ENCODE measurements at regions of chr10 and their contacts with region 1.

Region 1: GRCh38 chr10:32346134-32346550 is 816 bp downstream of the EPC1 start:
- DNase-seq: peak; percentile 93
- H3K4me3 Mint-ChIP-seq: peak overlapping the region; percentile 94
- H3K27ac Mint-ChIP-seq: peak overlapping the region; percentile 98
- H3K4me1 Mint-ChIP-seq: peaks cover 70% of the 10 kb centered on the region
- H3K27me3 Mint-ChIP-seq: no peaks in the 10 kb centered on the region

Region 2: DNA sequence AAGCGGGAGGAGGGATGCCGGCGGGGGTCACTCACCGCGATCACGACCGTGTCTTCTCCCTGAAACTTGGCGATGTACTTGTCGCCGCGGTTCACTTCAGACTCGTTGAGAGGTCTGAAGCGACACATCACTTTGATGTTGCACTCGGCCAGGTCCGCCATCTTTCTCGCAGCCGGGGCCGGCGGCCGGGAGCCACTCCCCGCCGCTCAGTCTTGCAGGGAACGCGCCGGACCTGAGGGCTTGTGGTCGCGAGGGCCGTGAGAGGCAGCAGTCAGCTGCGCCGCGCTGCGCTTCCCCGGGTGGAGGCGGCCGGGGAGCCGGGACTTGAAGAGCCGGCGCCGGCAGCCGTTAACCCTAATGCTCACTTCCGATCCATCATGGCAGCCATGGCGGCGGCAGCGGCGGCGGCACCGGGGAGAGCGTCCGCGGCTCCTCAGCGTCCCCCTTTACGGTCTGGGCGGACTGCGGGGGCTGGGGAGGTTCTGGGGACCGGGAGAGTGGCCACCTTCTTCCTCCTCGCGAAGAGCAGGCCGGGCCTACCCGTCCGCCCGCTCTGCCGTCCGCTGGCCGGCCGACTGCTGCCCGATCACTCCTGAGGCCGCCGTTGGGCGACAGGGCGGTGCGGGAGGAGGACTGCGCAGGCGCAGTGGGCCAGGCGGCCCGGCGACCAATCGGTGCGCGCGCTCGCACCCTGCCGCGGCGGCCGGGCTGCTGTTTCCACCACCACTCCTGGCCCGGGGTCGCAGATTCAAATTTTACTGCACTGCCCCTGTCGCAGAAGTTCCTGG is 290.1 kb before region 1 on chr10 and contains the start of gene KIF5B:
- intact Hi-C with region 1: loop called (anchors 1 kb)
- DNase-seq: peak; percentile 85
- H3K4me3 Mint-ChIP-seq: peak within 1 kb of the TSS; percentile 94
- H3K27ac Mint-ChIP-seq: peak within 1 kb of the TSS; percentile 92
- H3K4me1 Mint-ChIP-seq: peaks cover 41% of the 10 kb centered on the region
- H3K27me3 Mint-ChIP-seq: no peaks in the 10 kb centered on the region
- total RNA-seq, gene KIF5B: 80.7 and 83.4 TPM in 2 replicates

Region 3: GRCh38 chr10:32239770-32240169 is 106.4 kb before region 1 on chr10:
- intact Hi-C with region 1: loop called (anchors 1 kb)
- DNase-seq: no peak
- H3K4me3 Mint-ChIP-seq: no peak overlapping the region
- H3K27ac Mint-ChIP-seq: no peak overlapping the region
- H3K4me1 Mint-ChIP-seq: peaks cover 16% of the 10 kb centered on the region
- H3K27me3 Mint-ChIP-seq: no peaks in the 10 kb centered on the region

Region 4: GRCh38 chr10:32271617-32272016 is 74.5 kb before region 1 on chr10:
- intact Hi-C with region 1: no loop called
- DNase-seq: no peak
- H3K4me3 Mint-ChIP-seq: no peak overlapping the region
- H3K27ac Mint-ChIP-seq: no peak overlapping the region
- H3K4me1 Mint-ChIP-seq: no peaks in the 10 kb centered on the region
- H3K27me3 Mint-ChIP-seq: no peaks in the 10 kb centered on the region

Region 5: GRCh38 chr10:32332299-32332750 is 13.8 kb before region 1 on chr10:
- intact Hi-C with region 1: loop called (anchors 1 kb)
- DNase-seq: peak; percentile 71
- H3K4me3 Mint-ChIP-seq: peak overlapping the region; percentile 80
- H3K27ac Mint-ChIP-seq: peak overlapping the region; percentile 97
- H3K4me1 Mint-ChIP-seq: peaks cover 93% of the 10 kb centered on the region
- H3K27me3 Mint-ChIP-seq: no peaks in the 10 kb centered on the region

Region 6: DNA sequence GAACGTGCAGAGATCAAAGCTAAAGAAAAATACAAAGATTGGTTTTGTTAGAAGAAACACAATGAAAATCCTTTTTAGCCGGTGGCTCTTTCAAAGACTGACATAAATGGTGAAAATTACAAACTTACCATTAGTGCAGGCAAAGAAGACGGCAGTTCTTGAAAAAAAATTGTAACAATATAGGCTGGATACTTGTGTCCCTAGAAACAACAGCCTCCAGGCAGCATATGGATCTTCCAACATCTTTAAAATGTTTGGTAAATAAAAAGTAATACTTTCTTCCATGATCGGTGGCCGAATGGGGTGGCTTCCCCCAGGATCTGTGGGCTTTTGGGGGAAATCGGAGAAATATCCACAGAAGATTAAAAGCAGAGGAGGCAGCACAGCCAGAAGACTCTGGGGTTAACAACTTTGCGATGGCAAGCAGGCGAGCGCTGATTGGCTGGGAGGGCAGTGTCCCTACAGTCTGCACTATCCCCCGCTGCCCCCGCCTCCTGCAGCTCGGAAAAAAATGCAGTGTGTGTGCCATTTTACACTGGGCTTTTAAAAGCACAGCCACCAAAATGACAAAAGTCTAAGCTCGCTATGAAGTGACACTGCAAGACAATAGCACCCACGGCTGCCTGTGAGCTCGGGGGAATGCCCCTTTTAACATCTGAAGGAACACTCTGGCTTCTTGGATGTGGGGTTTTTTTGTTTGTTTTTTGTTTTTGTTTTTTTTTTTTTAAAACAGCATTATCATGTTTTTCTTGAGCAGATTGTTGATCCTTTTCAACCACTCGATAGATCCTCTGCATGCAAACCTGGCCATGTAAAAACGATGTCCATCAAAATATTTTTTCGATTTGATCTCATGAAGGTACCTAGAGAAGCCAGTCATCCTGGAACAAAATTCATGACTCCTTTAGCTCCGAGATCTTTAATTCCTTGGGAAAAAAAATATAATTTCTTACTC is 32.5 kb after region 1 on chr10:
- intact Hi-C with region 1: loop called (anchors 1 kb)
- DNase-seq: peak; percentile 88
- H3K4me3 Mint-ChIP-seq: no peak overlapping the region
- H3K27ac Mint-ChIP-seq: no peak overlapping the region
- H3K4me1 Mint-ChIP-seq: peaks cover 26% of the 10 kb centered on the region
- H3K27me3 Mint-ChIP-seq: no peaks in the 10 kb centered on the region

Measured in activated T-helper 1 cell treated with anti-CD3 and anti-CD28 coated beads, Interleukin-12 subunit alpha, Interleukin-12 subunit beta, Interleukin-2, Interleukin-4 antibody, amounts not matched to agents 30 ng/mL and 10 ng/mL and 1 ng/mL, durations not matched to agents 14 hours and 24 hours and 36 hours (primary cell).